Endothelial cell of umbilical vein (primary cell): ENCODE measurements at regions of chr9 and their contacts with region 1.

Region 1: DNA sequence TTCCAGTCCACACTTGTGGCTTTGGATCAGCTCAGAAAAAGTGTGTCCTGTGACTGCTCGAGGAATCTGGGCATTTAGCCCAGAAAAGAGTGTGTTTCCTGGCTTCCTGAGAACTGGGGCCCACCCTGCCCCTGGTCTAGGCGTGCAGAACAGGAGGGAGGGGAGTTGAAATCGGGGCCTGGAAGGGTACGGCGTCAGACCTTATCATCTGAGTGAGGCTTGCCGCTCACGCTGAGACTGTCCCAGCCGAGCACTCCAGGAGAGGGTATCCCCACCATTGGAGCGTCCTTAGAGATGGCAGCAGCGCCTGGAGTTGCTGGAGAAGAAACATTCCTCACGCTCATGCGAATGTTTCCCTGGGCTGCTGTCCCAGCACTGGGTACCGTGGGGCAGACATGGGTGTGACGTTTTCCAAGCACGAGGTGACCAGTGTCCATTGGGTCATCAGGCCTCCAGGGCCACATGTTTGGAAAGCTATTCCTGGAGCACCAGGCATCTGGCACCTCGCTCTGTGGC is 22.5 kb downstream of the NEK6 start:
- DNase-seq: peak; percentile 94
- H3K4me3 ChIP-seq: no peak overlapping the region
- H3K27ac ChIP-seq: peak overlapping the region; percentile 92
- H3K4me1 ChIP-seq: peaks cover 62% of the 10 kb centered on the region
- H3K27me3 ChIP-seq: no peaks in the 10 kb centered on the region
- CTCF ChIP-seq: no peak
- POLR2A ChIP-seq: peak; percentile 26

Region 2: GRCh38 chr9:124133727-124134126 is 146.5 kb before region 1 on chr9:
- CTCF ChIA-PET with region 1: interaction called, 17 read pairs
- POLR2A ChIA-PET with region 1: no interaction called
- dilution Hi-C with region 1: no loop called
- intact Hi-C with region 1: no loop called
- DNase-seq: peak; percentile 68
- H3K4me3 ChIP-seq: no peak overlapping the region
- H3K27ac ChIP-seq: no peak overlapping the region
- H3K4me1 ChIP-seq: peaks cover 7% of the 10 kb centered on the region
- H3K27me3 ChIP-seq: no peaks in the 10 kb centered on the region
- CTCF ChIP-seq: peak; percentile 36 to 64
- POLR2A ChIP-seq: no peak

Region 3: GRCh38 chr9:124267271-124267807 is 12.9 kb before region 1 on chr9:
- CTCF ChIA-PET with region 1: interaction called, 6 read pairs
- POLR2A ChIA-PET with region 1: interaction called, 4 read pairs
- dilution Hi-C with region 1: no loop called
- intact Hi-C with region 1: loop called (anchors 1 kb)
- DNase-seq: peak; percentile 89
- H3K4me3 ChIP-seq: no peak overlapping the region
- H3K27ac ChIP-seq: peak overlapping the region; percentile 87
- H3K4me1 ChIP-seq: peaks cover 72% of the 10 kb centered on the region
- H3K27me3 ChIP-seq: no peaks in the 10 kb centered on the region
- CTCF ChIP-seq: peak in 1 of 2 donors; percentile 15
- POLR2A ChIP-seq: peak; percentile 79

Region 4: GRCh38 chr9:124306098-124306735 is 26.0 kb after region 1 on chr9:
- CTCF ChIA-PET with region 1: no interaction called
- POLR2A ChIA-PET with region 1: no interaction called
- dilution Hi-C with region 1: no loop called
- intact Hi-C with region 1: no loop called
- DNase-seq: peak; percentile 81
- H3K4me3 ChIP-seq: no peak overlapping the region
- H3K27ac ChIP-seq: peak overlapping the region; percentile 75
- H3K4me1 ChIP-seq: peaks cover 31% of the 10 kb centered on the region
- H3K27me3 ChIP-seq: no peaks in the 10 kb centered on the region
- CTCF ChIP-seq: no peak
- POLR2A ChIP-seq: no peak